CD4-positive, alpha-beta memory T cell (primary cell): ENCODE measurements at regions of chr9 and their contacts with region 1.

Region 1: GRCh38 chr9:122464633-122465567 is 12.8 kb downstream of the OR1J1 start:
- DNase-seq: peak; percentile 66 to 70 (median 68)
- H3K4me3 ChIP-seq: peak overlapping the region; percentile 37 to 40
- H3K4me3 Mint-ChIP-seq: peak overlapping the region; percentile 84 to 96 (median 91)
- H3K27ac ChIP-seq: peak overlapping the region; percentile 18
- H3K27ac Mint-ChIP-seq: peak overlapping the region; percentile 66 to 94 (median 92)
- H3K4me1 ChIP-seq: peaks cover 9% of the 10 kb centered on the region
- H3K4me1 Mint-ChIP-seq: peaks cover 7 to 11% (median 9%) of the 10 kb centered on the region in 4 donors
- H3K27me3 ChIP-seq: no peaks in the 10 kb centered on the region
- H3K27me3 Mint-ChIP-seq: peaks cover 30 to 47% of the 10 kb centered on the region in 2 donors

Region 2: DNA sequence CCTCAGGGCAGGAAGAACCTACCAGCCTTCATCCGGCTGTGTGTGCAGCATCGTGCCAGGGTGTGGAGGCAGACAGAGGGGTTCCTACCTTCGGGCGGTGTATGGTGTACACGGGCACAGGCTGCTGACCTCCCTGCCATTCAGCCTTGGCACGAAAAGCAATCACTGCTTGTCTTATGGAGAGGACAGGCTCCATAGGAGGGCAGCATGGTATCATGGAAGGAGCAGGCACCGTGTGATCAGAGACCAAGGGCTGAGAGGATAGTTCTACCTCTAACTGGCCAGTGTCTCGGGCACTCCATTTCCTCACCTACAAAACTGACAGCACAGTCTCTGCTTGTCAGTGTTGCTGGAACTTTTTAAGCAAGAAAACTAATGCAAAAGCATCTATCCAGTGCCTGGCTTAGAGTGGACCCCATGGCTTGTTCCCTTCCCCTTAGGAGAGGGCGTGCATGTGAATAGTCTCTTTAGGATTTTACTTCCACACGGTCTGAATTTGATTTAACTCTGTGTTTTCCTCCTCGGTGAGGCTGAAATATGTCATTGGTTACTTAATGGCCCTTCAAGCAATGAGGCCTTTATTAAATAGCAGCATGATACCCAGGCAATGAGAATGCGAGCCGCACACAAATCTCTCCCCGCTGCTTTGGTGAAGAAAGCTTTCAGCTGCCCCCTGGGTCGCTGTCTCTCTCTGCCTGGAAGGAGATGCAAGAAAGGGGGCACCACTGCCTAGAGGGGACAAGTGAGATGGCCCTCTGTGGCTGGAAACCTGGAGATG is 394.0 kb before region 1 on chr9:
- CTCF ChIA-PET with region 1: no interaction called
- POLR2A ChIA-PET with region 1: no interaction called
- intact Hi-C with region 1: no loop called
- DNase-seq: no peak
- H3K4me3 ChIP-seq: no peak overlapping the region
- H3K4me3 Mint-ChIP-seq: no peak overlapping the region
- H3K27ac ChIP-seq: no peak overlapping the region
- H3K27ac Mint-ChIP-seq: no peak overlapping the region
- H3K4me1 ChIP-seq: no peaks in the 10 kb centered on the region
- H3K4me1 Mint-ChIP-seq: peaks cover 0 to 11% (median 2%) of the 10 kb centered on the region in 4 donors
- H3K27me3 ChIP-seq: no peaks in the 10 kb centered on the region
- H3K27me3 Mint-ChIP-seq: no peaks in the 10 kb centered on the region

Region 3: GRCh38 chr9:122991370-122991830 is 526.5 kb after region 1 on chr9:
- CTCF ChIA-PET with region 1: interaction called, 4 read pairs
- POLR2A ChIA-PET with region 1: no interaction called
- intact Hi-C with region 1: loop called (anchors 1 kb)
- DNase-seq: peak; percentile 25 to 61 (median 32)
- H3K4me3 ChIP-seq: no peak overlapping the region
- H3K4me3 Mint-ChIP-seq: no peak overlapping the region
- H3K27ac ChIP-seq: no peak overlapping the region
- H3K27ac Mint-ChIP-seq: peak overlapping the region in 3 of 7 donors; percentile 29 to 88 (median 29)
- H3K4me1 ChIP-seq: no peaks in the 10 kb centered on the region
- H3K4me1 Mint-ChIP-seq: peaks cover 0 to 3% (median under 1%) of the 10 kb centered on the region in 4 donors
- H3K27me3 ChIP-seq: no peaks in the 10 kb centered on the region
- H3K27me3 Mint-ChIP-seq: no peaks in the 10 kb centered on the region

Region 4: GRCh38 chr9:123389070-123389469 is 924.2 kb after region 1 on chr9:
- CTCF ChIA-PET with region 1: no interaction called
- POLR2A ChIA-PET with region 1: no interaction called
- intact Hi-C with region 1: loop called (anchors 10 kb)
- DNase-seq: peak in 1 of 5 donors; percentile 17
- H3K4me3 ChIP-seq: no peak overlapping the region
- H3K4me3 Mint-ChIP-seq: no peak overlapping the region
- H3K27ac ChIP-seq: no peak overlapping the region
- H3K27ac Mint-ChIP-seq: no peak overlapping the region
- H3K4me1 ChIP-seq: no peaks in the 10 kb centered on the region
- H3K4me1 Mint-ChIP-seq: no peaks in the 10 kb centered on the region
- H3K27me3 ChIP-seq: no peaks in the 10 kb centered on the region
- H3K27me3 Mint-ChIP-seq: no peaks in the 10 kb centered on the region